GM13977 (cell line): ENCODE measurements at regions of chr1 and their contacts with region 1.

Region 1: GRCh38 chr1:222465211-222466041 is 82.5 kb downstream of the HHIPL2 start:
- DNase-seq: peak; percentile 91
- CTCF ChIP-seq: peak; percentile 100

Region 2: DNA sequence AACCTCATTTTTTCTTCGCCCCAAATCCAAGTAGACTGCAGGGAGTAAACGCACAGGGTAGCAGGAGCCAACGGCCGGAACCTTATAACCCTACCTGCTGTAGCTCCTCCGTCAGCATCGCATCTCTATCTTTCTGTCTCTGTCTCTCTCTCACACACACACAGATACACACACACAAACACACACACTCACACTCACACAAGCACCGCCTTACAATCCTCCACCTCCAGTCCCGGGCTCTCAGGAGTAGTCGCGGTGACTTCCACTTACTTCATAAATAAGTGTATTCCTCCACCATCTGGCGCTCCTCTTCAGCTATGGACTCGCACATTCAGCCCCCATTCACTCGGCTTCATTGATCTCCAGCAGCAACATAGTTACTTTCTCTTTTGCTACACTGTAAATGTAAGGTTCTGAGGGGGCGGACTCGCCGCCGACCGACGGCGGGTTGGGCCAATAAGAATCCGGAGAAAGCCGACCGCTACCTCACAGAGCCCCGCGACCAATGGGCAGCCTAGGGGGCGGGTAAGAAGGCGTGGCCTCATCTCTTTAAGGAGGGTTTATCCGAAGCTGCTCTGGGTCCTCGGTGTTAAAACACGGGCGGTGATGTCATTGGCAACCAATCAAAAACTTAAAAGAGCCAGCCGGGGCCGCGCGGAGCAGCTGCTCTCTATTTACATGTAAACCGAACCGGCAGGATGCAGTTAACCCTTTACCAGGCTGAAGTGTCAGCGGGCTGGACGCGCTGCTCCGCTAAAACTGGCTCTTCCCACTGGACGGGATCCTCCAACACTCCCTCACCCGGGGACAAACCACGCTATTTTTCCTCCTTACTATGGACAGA is 723.5 kb before region 1 on chr1 and contains the start of gene DUSP10:
- in situ Hi-C with region 1: loop called (anchors 25 kb)
- DNase-seq: peak; percentile 98
- CTCF ChIP-seq: peak; percentile 34

Region 3: DNA sequence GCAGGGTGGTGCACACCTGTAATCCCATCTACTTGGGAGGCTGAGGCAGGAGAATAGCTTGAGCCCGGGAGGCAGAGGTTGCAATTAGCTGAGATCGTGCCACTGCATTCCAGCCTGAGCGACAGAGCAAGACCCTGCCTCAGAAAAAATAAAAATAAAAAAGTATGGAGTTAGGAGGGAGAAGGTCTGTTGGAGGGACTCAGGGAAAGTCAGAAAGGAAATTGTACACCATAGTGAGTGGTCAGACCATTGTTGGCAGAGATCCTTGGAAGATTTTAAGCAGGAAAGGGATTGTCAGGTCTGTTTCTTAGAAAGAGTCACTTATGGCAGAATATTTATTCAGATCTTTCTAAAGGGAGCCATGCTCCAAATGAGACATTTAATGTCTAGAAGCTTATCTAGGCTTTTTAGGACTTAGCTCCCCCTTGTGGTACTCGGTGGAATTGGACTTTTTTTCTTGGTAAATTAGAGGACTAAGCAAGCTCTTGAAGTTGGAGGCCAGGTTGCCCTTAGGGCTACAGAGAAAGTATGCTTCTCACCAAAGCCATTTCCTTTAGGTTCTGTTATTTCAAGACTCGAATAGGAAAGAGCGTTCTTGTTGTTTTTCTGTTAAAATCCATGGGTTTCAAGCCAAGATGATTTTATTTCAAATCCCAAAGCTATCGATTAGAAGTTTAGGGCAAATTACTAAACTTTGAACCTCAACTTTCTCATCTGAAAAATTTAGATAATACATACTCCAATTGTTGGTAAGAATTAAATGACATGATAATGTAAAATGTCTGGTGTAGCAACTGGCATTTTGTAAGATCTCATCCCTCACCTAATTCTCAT is 169.0 kb after region 1 on chr1:
- in situ Hi-C with region 1: loop called (anchors 5 kb)
- DNase-seq: peak; percentile 65
- CTCF ChIP-seq: peak; percentile 80

Region 4: GRCh38 chr1:223081181-223081994 is 616.0 kb after region 1 on chr1:
- in situ Hi-C with region 1: loop called (anchors 25 kb)
- DNase-seq: peak; percentile 82
- CTCF ChIP-seq: peak; percentile 88